ENCODE measurements at regions of chr17 and their contacts with region 1.

Region 1: DNA sequence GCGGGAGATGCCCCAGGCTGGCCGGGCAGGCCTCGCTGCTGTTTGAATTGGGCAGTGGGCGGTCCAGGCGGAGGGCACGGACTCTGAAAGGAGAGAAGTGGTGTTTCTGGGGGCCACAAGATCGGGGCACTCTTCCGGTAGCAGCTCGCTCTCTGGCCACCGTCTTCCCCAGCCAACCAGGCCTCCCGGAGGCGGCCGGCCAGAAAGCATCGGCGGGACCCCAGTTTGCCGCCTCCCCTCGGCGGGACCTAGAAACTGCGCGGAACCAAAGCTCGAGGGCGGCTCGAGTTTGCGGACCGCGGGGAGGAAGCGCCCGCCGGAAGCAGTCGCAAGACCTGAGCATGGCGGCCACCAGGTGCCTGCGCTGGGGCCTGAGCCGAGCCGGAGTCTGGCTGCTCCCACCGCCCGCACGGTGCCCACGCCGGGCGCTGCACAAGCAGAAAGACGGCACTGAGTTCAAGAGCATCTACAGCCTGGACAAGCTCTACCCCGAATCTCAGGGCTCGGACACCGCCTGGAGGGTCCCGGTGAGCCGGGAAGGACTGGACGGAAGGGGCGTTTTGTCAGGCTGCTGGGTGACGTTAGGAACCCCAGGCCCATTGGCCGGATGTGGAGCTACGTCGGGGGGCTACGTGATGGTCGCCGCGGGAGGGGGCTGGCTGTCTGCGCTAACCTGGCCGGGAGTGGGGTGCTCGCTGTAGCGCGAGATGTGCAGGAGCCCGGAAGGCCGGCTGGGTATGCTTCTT is at the start of gene MRPL58:
- DNase-seq: peak; percentile 69 to 85
- H3K4me3 ChIP-seq: peak within 1 kb of the TSS; percentile 89 to 93
- H3K27ac ChIP-seq: peak within 1 kb of the TSS; percentile 85 to 87
- H3K4me1 ChIP-seq: peaks cover 0 to 25% (median 15%) of the 10 kb centered on the region in 4 donors
- H3K27me3 ChIP-seq: no peaks in the 10 kb centered on the region
- CTCF ChIP-seq: peak; percentile 54 to 55

Region 2: GRCh38 chr17:74904687-74905409 is 107.7 kb before region 1 on chr17:
- intact Hi-C with region 1: no loop called
- DNase-seq: no peak
- H3K4me3 ChIP-seq: no peak overlapping the region
- H3K27ac ChIP-seq: no peak overlapping the region
- H3K4me1 ChIP-seq: no peaks in the 10 kb centered on the region
- H3K27me3 ChIP-seq: peaks cover 0 to 61% of the 10 kb centered on the region in 2 donors
- CTCF ChIP-seq: no peak

Region 3: GRCh38 chr17:74961657-74962490 is 50.6 kb before region 1 on chr17:
- intact Hi-C with region 1: loop called (anchors 5 kb)
- DNase-seq: peak; percentile 84 to 91
- H3K4me3 ChIP-seq: no peak overlapping the region
- H3K27ac ChIP-seq: no peak overlapping the region
- H3K4me1 ChIP-seq: peaks cover 0 to 7% (median 0%) of the 10 kb centered on the region in 4 donors
- H3K27me3 ChIP-seq: peaks cover 0 to 28% of the 10 kb centered on the region in 2 donors
- CTCF ChIP-seq: peak; percentile 75 to 86

Region 4: DNA sequence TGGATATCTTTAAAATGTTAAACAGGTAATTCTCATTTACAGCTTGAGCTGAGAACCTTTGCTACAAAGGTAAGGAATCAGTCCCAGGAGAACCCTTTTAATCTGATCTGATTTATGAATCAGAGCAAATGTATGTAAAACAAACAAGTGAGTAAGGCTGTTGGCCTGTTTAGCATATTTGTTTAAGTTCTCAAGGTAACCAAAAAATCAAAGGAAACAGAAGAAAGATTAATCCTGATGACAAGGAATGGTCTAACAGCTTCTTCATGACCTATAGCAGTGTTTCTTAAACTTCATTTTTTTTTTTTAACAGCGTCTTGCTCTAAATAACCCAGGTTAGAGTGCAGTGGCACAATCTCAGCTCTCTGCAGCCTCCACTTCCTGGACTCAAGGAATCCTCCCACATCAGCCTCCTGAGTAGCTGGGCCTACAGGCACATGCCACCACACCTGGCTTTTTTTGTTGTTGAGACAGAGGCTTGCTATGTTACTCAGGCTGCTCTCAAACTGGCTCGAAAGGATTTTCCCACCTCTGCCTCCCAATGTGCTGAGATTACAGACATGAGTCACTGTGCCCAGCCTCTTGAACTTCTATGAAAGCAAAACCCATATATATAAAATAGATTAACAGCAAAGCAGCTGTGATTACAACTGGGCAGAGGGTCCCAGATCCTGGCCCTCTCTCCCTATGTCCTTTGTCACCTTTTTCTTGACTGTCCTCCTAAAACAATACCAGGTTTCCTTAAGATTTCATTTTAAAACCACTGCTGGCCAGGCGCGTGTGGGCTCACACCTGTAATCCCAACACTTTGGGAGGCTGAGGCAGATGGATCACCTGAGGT is 146.9 kb after region 1 on chr17:
- intact Hi-C with region 1: no loop called
- DNase-seq: peak in 1 of 2 donors; percentile 16
- H3K4me3 ChIP-seq: no peak overlapping the region
- H3K27ac ChIP-seq: no peak overlapping the region
- H3K4me1 ChIP-seq: peaks cover 0 to 3% (median 0%) of the 10 kb centered on the region in 4 donors
- H3K27me3 ChIP-seq: no peaks in the 10 kb centered on the region
- CTCF ChIP-seq: no peak

Measured in tibial artery (tissue), 4 donors.